ENCODE measurements at regions of chr2 and their contacts with region 1.

Region 1: GRCh38 chr2:207746131-207746530 is 23.6 kb downstream of the FZD5 start:
- DNase-seq: peak; percentile 64
- H3K4me3 ChIP-seq: no peak overlapping the region
- H3K27ac ChIP-seq: peak overlapping the region in 1 of 2 experiments; percentile 50; a peak in 2 of 4 replicates
- H3K4me1 ChIP-seq: peaks cover 0 to 20% of the 10 kb centered on the region in 2 experiments; a peak in 2 of 4 replicates
- H3K27me3 ChIP-seq: no peaks in the 10 kb centered on the region
- CTCF ChIP-seq: peak; percentile 98
- EP300 ChIP-seq: no peak
- RAD21 ChIP-seq: peak; percentile 99

Region 2: DNA sequence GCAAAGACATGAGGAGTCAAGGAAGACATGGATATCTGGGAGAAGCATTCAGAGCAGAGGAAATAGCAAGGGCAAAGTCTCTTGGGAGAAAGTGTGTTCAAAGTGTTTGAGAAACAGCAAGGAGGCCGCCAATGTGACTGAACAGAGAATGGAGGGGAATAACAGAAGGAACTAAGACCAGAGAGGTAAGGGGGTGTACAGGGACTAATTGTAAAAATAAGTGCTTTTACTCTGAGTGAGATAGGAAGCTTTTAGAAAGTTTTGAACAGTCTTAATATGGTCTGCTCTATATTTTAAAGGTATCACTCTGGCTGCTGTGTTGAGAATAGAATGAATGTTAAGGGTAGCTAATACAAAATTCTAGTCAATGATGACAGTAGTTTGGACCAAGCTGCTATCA is 223.1 kb before region 1 on chr2:
- CTCF ChIA-PET with region 1: no interaction called
- POLR2A ChIA-PET with region 1: no interaction called
- DNase-seq: no peak
- H3K4me3 ChIP-seq: no peak overlapping the region
- H3K27ac ChIP-seq: no peak overlapping the region
- H3K4me1 ChIP-seq: no peaks in the 10 kb centered on the region
- H3K27me3 ChIP-seq: no peaks in the 10 kb centered on the region
- CTCF ChIP-seq: no peak
- EP300 ChIP-seq: no peak
- RAD21 ChIP-seq: no peak

Region 3: DNA sequence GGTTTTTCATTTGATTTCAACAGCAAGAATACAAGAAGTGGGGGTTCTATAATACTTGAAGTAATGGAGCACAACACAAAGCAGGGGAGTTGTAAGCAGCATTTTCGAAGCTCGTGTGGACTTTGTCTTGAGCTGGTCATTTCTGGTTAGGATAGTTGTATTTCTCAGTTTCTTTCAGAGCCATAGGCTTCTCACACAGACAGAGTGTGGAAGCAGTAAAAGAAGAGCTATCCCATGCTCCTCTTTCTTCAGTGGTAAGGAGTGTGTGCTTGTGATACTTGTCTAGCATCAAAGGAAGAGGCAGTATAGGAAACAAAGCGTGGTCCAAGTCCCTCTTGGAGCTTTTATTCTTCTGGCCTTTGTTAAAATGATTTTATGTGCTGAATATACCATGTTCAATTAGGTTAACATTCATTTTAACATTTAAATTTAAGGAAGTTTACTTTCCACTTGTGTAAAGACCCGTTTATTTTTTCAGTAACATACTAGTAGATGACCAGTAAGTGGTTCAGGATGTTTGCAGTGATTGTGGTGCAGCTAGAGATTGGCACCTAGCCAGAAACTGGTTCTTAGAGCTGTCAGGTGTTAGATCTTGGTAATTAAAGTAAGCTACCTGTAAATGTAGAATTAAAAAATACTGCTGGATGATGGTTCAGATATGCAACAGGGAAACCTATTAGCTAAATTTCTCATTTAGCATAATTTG is 20.1 kb before region 1 on chr2:
- CTCF ChIA-PET with region 1: interaction called, 33 read pairs
- POLR2A ChIA-PET with region 1: no interaction called
- DNase-seq: peak; percentile 23
- H3K4me3 ChIP-seq: no peak overlapping the region
- H3K27ac ChIP-seq: no peak overlapping the region
- H3K4me1 ChIP-seq: peaks cover 0 to 27% of the 10 kb centered on the region in 2 experiments; a peak in 1 of 4 replicates
- H3K27me3 ChIP-seq: no peaks in the 10 kb centered on the region
- CTCF ChIP-seq: no peak
- EP300 ChIP-seq: no peak
- RAD21 ChIP-seq: no peak

Region 4: GRCh38 chr2:207762146-207762545 is 16.0 kb after region 1 on chr2:
- CTCF ChIA-PET with region 1: interaction called, 22 read pairs
- POLR2A ChIA-PET with region 1: no interaction called
- DNase-seq: no peak
- H3K4me3 ChIP-seq: no peak overlapping the region
- H3K27ac ChIP-seq: no peak overlapping the region; a peak in 1 of 4 replicates
- H3K4me1 ChIP-seq: peaks cover 6 to 10% of the 10 kb centered on the region in 2 experiments; a peak in 2 of 4 replicates
- H3K27me3 ChIP-seq: no peaks in the 10 kb centered on the region
- CTCF ChIP-seq: no peak
- EP300 ChIP-seq: no peak
- RAD21 ChIP-seq: no peak

Region 5: GRCh38 chr2:207967121-207967520 is 221.0 kb after region 1 on chr2:
- CTCF ChIA-PET with region 1: interaction called, 102 read pairs
- POLR2A ChIA-PET with region 1: no interaction called
- DNase-seq: no peak
- H3K4me3 ChIP-seq: no peak overlapping the region
- H3K27ac ChIP-seq: no peak overlapping the region
- H3K4me1 ChIP-seq: peaks cover 0 to 6% of the 10 kb centered on the region in 2 experiments; a peak in 2 of 4 replicates
- H3K27me3 ChIP-seq: no peaks in the 10 kb centered on the region
- CTCF ChIP-seq: no peak
- EP300 ChIP-seq: no peak
- RAD21 ChIP-seq: no peak

Region 6: GRCh38 chr2:208033758-208034502 is 287.8 kb after region 1 on chr2:
- CTCF ChIA-PET with region 1: interaction called, 128 read pairs
- POLR2A ChIA-PET with region 1: no interaction called
- DNase-seq: no peak
- H3K4me3 ChIP-seq: no peak overlapping the region; a peak in 1 of 4 replicates
- H3K27ac ChIP-seq: no peak overlapping the region
- H3K4me1 ChIP-seq: no peaks in the 10 kb centered on the region
- H3K27me3 ChIP-seq: no peaks in the 10 kb centered on the region
- CTCF ChIP-seq: peak; percentile 10; the same call in 1 of the 2 replicates
- EP300 ChIP-seq: no peak
- RAD21 ChIP-seq: peak; percentile 47

Region 7: DNA sequence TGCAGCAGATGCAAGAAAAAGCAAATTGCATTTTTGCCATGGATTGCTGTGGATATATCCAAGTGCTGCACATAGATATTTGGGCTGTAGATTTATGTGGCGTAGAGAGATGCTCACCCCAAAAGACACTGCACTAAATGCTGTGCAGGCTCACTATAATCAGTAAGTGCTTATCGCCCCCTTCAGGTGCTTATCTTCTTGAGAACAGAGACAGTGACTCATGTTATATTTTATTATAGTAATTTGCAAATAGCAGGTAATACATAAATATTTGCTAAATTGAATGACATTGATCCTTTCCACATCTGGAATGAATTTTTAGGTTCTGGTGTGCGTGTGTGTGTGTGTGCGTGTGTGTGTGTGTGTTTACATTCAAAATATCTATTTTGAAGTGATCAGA is 316.0 kb after region 1 on chr2:
- CTCF ChIA-PET with region 1: interaction called, 25 read pairs
- POLR2A ChIA-PET with region 1: no interaction called
- DNase-seq: no peak
- H3K4me3 ChIP-seq: no peak overlapping the region; a peak in 1 of 4 replicates
- H3K27ac ChIP-seq: peak overlapping the region in 1 of 2 experiments; percentile 28; a peak in 1 of 4 replicates
- H3K4me1 ChIP-seq: peaks cover 0 to 4% of the 10 kb centered on the region in 2 experiments; a peak in 2 of 4 replicates
- H3K27me3 ChIP-seq: no peaks in the 10 kb centered on the region
- CTCF ChIP-seq: peak; percentile 51
- EP300 ChIP-seq: no peak
- RAD21 ChIP-seq: peak; percentile 66

Measured in SK-N-SH (cell line).